Ovary (tissue), 10 donors: ENCODE measurements at regions of chr6 and their contacts with region 1.

Region 1: DNA sequence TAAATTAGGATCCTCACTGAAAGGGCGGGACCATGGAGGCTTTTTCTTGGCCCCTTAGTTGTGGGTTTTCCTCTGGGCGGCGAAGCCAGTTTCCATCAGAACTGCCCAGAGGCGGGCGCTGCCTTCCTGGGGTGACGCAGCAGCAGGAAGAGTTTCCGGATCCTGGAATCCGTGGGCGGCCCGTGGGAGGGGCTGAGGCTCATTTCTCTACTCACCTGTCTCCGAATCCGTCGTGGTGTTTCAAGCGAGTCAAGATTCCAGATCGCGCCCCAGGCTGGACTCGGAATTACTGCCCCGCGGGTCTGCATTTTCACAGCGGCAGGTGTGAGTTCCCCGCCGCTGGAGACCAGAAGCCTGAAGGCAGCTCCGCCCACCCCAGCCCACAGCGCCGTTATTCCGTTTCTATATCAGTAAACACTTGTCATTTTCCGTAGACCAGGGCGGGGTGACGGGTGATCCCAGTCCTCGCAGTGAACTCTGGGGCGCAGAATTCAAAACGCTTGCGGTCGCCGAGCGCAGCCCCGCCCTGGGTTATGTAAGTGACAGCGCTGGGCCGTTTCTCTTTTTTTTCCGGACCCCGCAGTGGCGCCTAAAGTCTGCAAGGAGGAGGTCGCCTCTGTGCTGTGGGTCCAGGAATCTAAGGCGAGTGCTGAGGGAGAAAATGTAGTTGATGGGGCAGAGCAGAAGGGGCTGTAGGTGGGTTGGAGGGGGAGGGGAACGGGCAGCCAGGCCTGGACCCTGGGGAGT is 27.2 kb upstream of the POU5F1 start:
- DNase-seq: peak; percentile 88 to 91 (median 89)
- H3K4me3 ChIP-seq: peak overlapping the region; percentile 81
- H3K27ac ChIP-seq: peak overlapping the region; percentile 80 to 88
- H3K4me1 ChIP-seq: peaks cover 2% of the 10 kb centered on the region
- H3K27me3 ChIP-seq: no peaks in the 10 kb centered on the region
- CTCF ChIP-seq: peak in 2 of 3 donors; percentile 6 to 17
- EP300 ChIP-seq: peak; percentile 29
- POLR2A ChIP-seq: peak; percentile 78

Region 2: DNA sequence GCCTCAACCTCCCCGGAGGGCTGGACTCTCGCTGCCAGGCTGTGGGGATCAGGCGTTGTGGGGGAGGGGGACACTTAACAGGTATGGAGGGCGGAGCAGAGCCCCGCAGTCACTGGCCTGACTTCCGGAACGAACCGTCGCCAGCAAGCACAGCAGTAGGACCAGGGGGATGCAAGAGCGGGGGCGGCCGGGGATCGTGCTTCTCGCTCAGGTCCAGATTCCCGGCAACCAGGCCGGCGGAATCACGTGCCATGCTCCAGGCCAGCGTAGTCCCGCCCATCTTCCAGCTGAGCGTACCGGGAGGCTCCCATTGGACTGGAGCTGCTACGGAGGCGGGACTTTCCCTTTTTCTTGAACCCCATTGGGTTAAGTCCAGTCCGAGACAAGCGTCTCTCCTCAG is 17.2 kb before region 1 on chr6:
- intact Hi-C with region 1: no loop called
- DNase-seq: peak; percentile 69 to 85 (median 74)
- H3K4me3 ChIP-seq: peak overlapping the region; percentile 20
- H3K27ac ChIP-seq: no peak overlapping the region
- H3K4me1 ChIP-seq: no peaks in the 10 kb centered on the region
- H3K27me3 ChIP-seq: no peaks in the 10 kb centered on the region
- CTCF ChIP-seq: no peak
- EP300 ChIP-seq: no peak
- POLR2A ChIP-seq: no peak

Region 3: GRCh38 chr6:31366693-31367470 is 169.2 kb after region 1 on chr6:
- intact Hi-C with region 1: loop called in 3 of 4 experiments (anchors 5 to 10 kb)
- DNase-seq: peak; percentile 83 to 93 (median 90)
- H3K4me3 ChIP-seq: no peak overlapping the region
- H3K27ac ChIP-seq: no peak overlapping the region
- H3K4me1 ChIP-seq: no peaks in the 10 kb centered on the region
- H3K27me3 ChIP-seq: no peaks in the 10 kb centered on the region
- CTCF ChIP-seq: peak; percentile 80 to 93 (median 93)
- EP300 ChIP-seq: no peak
- POLR2A ChIP-seq: no peak

Region 4: GRCh38 chr6:31513456-31514165 is 315.9 kb after region 1 on chr6:
- intact Hi-C with region 1: no loop called
- DNase-seq: no peak
- H3K4me3 ChIP-seq: no peak overlapping the region
- H3K27ac ChIP-seq: no peak overlapping the region
- H3K4me1 ChIP-seq: no peaks in the 10 kb centered on the region
- H3K27me3 ChIP-seq: no peaks in the 10 kb centered on the region
- CTCF ChIP-seq: no peak
- EP300 ChIP-seq: no peak
- POLR2A ChIP-seq: no peak